ENCODE measurements at regions of chr13 and their contacts with region 1.

Region 1: DNA sequence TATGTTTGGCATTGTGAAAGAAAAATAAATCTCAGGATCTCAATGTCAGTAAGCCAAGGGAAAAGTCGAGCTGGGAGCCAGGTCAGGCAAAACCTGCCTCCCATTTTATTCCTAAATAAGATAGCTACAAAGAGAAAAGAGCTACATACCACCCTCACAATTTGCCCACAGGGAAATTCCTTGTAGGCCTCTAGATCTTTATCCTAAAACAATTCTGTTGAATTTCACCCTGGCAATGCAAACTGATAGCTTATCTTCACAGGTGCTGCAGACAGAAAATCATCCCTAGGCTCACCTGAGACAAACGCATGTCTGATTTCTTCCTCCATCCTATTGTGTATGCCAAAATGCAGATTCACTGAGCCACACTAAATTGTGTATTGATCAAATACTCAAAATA is 2587.1 kb downstream of the PCDH9 start:
- DNase-seq: peak in 1 of 2 experiments; percentile 5
- H3K4me3 ChIP-seq: no peak overlapping the region
- H3K27ac ChIP-seq: no peak overlapping the region
- H3K4me1 ChIP-seq: 0 out of 2 replicates have a peak, but pooled peaks cover 9% of the 10 kb centered on the region
- H3K27me3 ChIP-seq: no peaks in the 10 kb centered on the region
- CTCF ChIP-seq: no peak

Region 2: GRCh38 chr13:64505336-64505910 is 137.6 kb before region 1 on chr13:
- CTCF ChIA-PET with region 1: no interaction called
- POLR2A ChIA-PET with region 1: no interaction called
- intact Hi-C with region 1: no loop called
- DNase-seq: no peak
- H3K4me3 ChIP-seq: no peak overlapping the region
- H3K27ac ChIP-seq: no peak overlapping the region
- H3K4me1 ChIP-seq: no peaks in the 10 kb centered on the region
- H3K27me3 ChIP-seq: no peaks in the 10 kb centered on the region
- CTCF ChIP-seq: no peak

Region 3: GRCh38 chr13:64627654-64628053 is 15.4 kb before region 1 on chr13:
- CTCF ChIA-PET with region 1: no interaction called
- POLR2A ChIA-PET with region 1: interaction called, 13 read pairs
- intact Hi-C with region 1: no loop called
- DNase-seq: no peak
- H3K4me3 ChIP-seq: no peak overlapping the region
- H3K27ac ChIP-seq: no peak overlapping the region
- H3K4me1 ChIP-seq: no peaks in the 10 kb centered on the region
- H3K27me3 ChIP-seq: no peaks in the 10 kb centered on the region
- CTCF ChIP-seq: no peak